IMR-90 (cell line): ENCODE measurements at regions of chrX and their contacts with region 1.

Region 1: GRCh38 chrX:119266364-119266995 is 30.4 kb downstream of the PGRMC1 start:
- DNase-seq: peak; percentile 12
- ATAC-seq: peak; percentile 59
- H3K4me3 ChIP-seq: no peak overlapping the region
- H3K27ac ChIP-seq: no peak overlapping the region
- H3K4me1 ChIP-seq: no peaks in the 10 kb centered on the region
- H3K27me3 ChIP-seq: peaks cover 7% of the 10 kb centered on the region
- CTCF ChIP-seq: peak; percentile 61
- POLR2A ChIP-seq: no peak
- RAD21 ChIP-seq: peak; percentile 46

Region 2: DNA sequence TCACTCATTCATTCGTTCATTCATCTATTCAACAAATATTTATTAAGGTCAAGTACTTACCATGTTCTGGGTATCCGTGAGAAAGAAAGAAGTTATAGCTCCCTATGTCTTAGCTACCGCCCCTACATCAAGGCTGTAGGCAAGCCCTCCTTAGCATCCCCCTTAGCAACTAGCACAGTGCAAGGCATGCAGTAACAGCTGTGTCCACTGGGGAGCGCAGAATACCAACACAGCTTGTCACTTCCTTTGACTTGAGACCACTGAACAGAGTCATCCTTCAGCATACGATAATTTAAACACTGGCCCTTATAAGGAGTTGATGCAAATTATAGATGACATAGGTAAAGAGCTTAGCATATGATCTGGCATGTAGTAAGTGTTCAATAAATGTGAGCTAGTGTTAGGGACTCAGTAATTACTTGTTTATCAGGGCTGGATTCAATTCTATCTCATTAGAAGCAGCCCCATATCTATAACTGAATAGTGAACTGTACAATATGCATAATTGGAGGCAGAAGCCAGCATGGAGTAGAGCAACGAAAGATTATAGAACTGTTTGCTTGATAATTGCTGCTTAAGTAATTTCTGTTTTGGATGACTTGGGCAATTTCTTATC is 147.6 kb before region 1 on chrX:
- CTCF ChIA-PET with region 1: interaction called, 4 read pairs
- POLR2A ChIA-PET with region 1: no interaction called
- dilution Hi-C with region 1: no loop called
- in situ Hi-C with region 1: no loop called
- intact Hi-C with region 1: loop called (anchors 1 kb)
- DNase-seq: peak; percentile 42
- ATAC-seq: peak; percentile 95
- H3K4me3 ChIP-seq: no peak overlapping the region
- H3K27ac ChIP-seq: no peak overlapping the region
- H3K4me1 ChIP-seq: no peaks in the 10 kb centered on the region
- H3K27me3 ChIP-seq: peaks cover 10% of the 10 kb centered on the region
- CTCF ChIP-seq: peak; percentile 61
- POLR2A ChIP-seq: no peak
- RAD21 ChIP-seq: peak; percentile 62

Region 3: DNA sequence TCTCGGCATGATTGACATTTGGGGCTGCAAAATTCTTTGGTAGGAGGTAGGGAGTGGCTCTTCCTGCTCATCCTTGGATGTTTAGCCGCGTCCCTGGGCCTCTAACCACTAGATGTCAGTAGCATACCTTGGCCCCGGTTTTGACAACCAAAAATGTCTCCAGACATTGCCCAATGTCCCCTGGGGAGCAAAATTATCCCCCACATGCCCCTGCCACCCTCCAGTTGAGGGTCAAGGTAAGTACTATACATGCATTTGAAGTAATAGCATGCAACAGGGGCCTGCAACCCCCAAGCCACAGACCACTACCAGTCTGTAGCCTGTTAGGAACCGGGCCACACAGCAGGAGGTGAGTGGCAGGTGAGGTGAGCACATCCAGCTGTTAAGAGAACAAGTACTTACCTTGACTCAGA is 121.2 kb before region 1 on chrX:
- CTCF ChIA-PET with region 1: no interaction called
- POLR2A ChIA-PET with region 1: no interaction called
- dilution Hi-C with region 1: no loop called
- in situ Hi-C with region 1: no loop called
- intact Hi-C with region 1: loop called (anchors 10 kb)
- DNase-seq: no peak
- ATAC-seq: 0 out of 2 replicates have a peak, but pooled peaks have one; percentile 32
- H3K4me3 ChIP-seq: no peak overlapping the region
- H3K27ac ChIP-seq: no peak overlapping the region
- H3K4me1 ChIP-seq: no peaks in the 10 kb centered on the region
- H3K27me3 ChIP-seq: peaks cover 8% of the 10 kb centered on the region
- CTCF ChIP-seq: peak; percentile 35
- POLR2A ChIP-seq: no peak
- RAD21 ChIP-seq: peak; percentile 48